Dendritic cell treated with granulocyte-macrophage colony-stimulating factor and Interleukin-4, amounts not matched to agents 40 ng/mL and 50 ng/mL, for 4 days (primary cell): ENCODE measurements at regions of chr5 and their contacts with region 1.

Region 1: GRCh38 chr5:138352071-138352721 is at the start of gene KDM3B:
- H3K4me3 Mint-ChIP-seq: peak within 1 kb of the TSS; percentile 96
- H3K27ac Mint-ChIP-seq: peak within 1 kb of the TSS; percentile 99
- H3K4me1 Mint-ChIP-seq: peaks cover 44% of the 10 kb centered on the region
- H3K27me3 Mint-ChIP-seq: no peaks in the 10 kb centered on the region

Region 2: DNA sequence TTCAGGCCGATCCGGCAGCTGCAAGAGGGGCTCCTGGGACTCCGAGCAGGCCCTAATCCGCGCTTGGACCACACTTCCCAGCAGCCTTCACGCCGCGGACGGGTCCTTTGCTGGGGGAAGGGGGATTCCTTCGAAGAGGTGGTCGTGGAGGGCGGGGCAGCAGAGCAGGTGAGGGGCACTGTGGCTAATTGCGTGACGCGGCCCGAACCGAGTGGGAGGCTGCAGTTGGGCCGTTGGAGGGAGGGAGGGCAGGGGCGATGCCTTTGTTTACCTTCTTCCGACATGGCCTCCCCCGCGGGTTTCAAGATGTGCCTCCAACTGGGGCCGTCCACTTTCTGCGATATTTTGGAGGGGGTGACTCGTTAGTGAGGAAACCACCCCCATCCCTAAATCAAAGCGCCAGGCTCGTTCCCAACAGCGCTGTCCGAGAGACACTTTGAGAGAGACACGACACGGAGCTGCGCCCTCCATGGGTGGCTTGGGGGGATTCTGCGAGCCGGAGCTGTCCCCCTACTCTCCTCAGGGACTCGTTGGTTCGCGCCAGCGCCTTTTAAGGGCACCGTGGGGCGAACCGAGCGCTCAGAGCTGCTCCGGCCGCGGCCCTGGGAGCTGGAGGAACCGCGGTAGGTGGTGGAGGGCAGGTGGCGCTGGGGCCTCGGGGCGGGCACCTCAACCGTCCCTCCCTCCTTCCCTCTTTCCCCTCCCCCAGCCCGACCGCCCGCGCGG is 14.3 kb before region 1 on chr5 and contains the start of gene FAM53C:
- intact Hi-C with region 1: loop called (anchors 1 kb)
- H3K4me3 Mint-ChIP-seq: peak within 1 kb of the TSS; percentile 84
- H3K27ac Mint-ChIP-seq: peak within 1 kb of the TSS; percentile 100
- H3K4me1 Mint-ChIP-seq: peaks cover 42% of the 10 kb centered on the region
- H3K27me3 Mint-ChIP-seq: no peaks in the 10 kb centered on the region

Region 3: DNA sequence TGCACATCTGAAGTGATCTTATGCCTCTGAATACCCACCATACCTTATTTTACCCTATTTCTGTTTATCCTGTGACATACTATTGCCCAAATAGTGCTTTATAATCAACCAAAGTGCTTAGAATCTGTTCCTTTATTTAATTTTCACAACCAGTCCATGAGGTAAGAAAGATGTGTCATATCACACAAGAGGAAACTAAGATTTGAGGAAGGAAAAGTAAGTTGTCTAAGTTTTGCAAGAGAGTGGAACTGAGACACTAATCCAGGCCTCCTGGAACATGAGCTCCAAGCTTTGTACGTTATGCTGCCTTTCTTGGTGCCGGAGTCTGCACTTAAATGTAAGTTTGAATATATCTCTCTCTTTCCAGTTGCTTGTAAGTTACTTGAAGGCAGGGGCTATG is 17.5 kb after region 1 on chr5:
- intact Hi-C with region 1: loop called (anchors 1 kb)
- H3K4me3 Mint-ChIP-seq: peak overlapping the region; percentile 46
- H3K27ac Mint-ChIP-seq: peak overlapping the region; percentile 93
- H3K4me1 Mint-ChIP-seq: peaks cover 55% of the 10 kb centered on the region
- H3K27me3 Mint-ChIP-seq: no peaks in the 10 kb centered on the region